Heart left ventricle (tissue), 16 donors: ENCODE measurements at regions of chr4 and their contacts with region 1.

Region 1: GRCh38 chr4:186587416-186588018 is 32.1 kb upstream of the MTNR1A start:
- DNase-seq: peak; percentile 41 to 75 (median 63)
- ATAC-seq: peak in 3 of 4 donors; percentile 59 to 71 (median 61)
- H3K4me3 ChIP-seq: no peak overlapping the region
- H3K27ac ChIP-seq: no peak overlapping the region
- H3K4me1 ChIP-seq: peaks cover 0 to 16% (median 0%) of the 10 kb centered on the region in 12 donors
- H3K27me3 ChIP-seq: no peaks in the 10 kb centered on the region
- CTCF ChIP-seq: peak; percentile 82 to 94 (median 91)
- POLR2A ChIP-seq: no peak

Region 2: GRCh38 chr4:186067757-186068385 is 519.6 kb before region 1 on chr4:
- intact Hi-C with region 1: loop called in 3 of 10 experiments (anchors 5 to 10 kb)
- DNase-seq: peak in 4 of 5 donors; percentile 50 to 62 (median 55)
- ATAC-seq: peak; percentile 71 to 92 (median 91)
- H3K4me3 ChIP-seq: peak overlapping the region; percentile 19 to 71 (median 60)
- H3K27ac ChIP-seq: peak overlapping the region in 6 of 12 donors; percentile 46 to 79 (median 72)
- H3K4me1 ChIP-seq: peaks cover 0 to 20% (median 4%) of the 10 kb centered on the region in 12 donors
- H3K27me3 ChIP-seq: no peaks in the 10 kb centered on the region
- CTCF ChIP-seq: peak; percentile 35 to 65 (median 53)
- POLR2A ChIP-seq: no peak

Region 3: DNA sequence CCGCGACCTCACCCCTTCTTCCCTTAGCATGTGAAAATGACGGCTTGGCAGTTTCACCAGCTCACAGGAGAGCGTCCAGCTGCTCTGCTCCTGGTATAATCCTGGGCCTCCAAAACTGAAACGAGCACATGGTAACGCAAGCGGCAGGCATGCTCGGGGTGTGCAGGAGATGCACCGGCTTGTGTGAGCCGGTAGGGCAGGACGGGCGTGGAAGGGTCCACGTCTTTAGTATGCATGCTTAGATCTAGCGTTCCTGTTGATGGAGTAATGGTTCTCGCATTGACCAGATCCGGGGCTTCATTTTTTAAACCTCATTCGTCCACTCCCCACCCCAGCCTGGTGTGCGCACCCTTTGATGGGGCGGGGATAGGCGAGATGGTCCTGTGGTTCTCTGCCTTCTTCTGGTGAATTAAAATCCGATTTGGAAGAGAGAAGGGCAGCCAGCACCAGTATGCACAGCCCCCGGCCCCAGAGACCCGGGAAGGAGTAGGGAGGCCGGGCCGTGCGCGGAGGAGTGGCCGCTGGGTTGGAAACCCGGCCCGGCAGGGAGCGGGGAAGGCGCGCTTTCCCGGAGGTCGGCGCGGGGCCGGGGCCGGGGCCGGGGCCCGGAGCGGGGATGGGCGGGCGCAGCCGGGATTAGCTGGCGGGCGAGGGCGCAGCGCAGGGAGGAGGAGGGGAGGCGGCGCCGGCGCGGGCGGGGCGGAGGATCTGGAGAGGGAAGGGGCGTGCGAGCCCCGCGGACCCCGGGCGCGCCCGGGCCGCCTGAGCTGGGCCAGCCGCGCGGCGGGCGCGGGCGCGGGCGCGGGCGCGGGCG is 443.2 kb before region 1 on chr4:
- intact Hi-C with region 1: loop called in 1 of 10 experiments (anchors 10 kb)
- DNase-seq: peak; percentile 65 to 78 (median 69)
- ATAC-seq: peak; percentile 40 to 86 (median 73)
- H3K4me3 ChIP-seq: peak overlapping the region; percentile 35 to 81 (median 62)
- H3K27ac ChIP-seq: peak overlapping the region in 11 of 12 donors; percentile 52 to 86 (median 74)
- H3K4me1 ChIP-seq: peaks cover 0 to 19% (median 8%) of the 10 kb centered on the region in 12 donors
- H3K27me3 ChIP-seq: peaks cover 0 to 24% (median 0%) of the 10 kb centered on the region in 9 donors
- CTCF ChIP-seq: peak in 3 of 12 donors; percentile 16 to 28 (median 17)
- POLR2A ChIP-seq: no peak

Region 4: GRCh38 chr4:186297013-186297645 is 290.4 kb before region 1 on chr4:
- intact Hi-C with region 1: loop called (anchors 1 to 2 kb)
- DNase-seq: no peak
- ATAC-seq: no peak
- H3K4me3 ChIP-seq: no peak overlapping the region
- H3K27ac ChIP-seq: no peak overlapping the region
- H3K4me1 ChIP-seq: peaks cover 0 to 4% (median 0%) of the 10 kb centered on the region in 12 donors
- H3K27me3 ChIP-seq: peaks cover 3 to 44% (median 20%) of the 10 kb centered on the region in 9 donors
- CTCF ChIP-seq: peak; percentile 47 to 72 (median 63)
- POLR2A ChIP-seq: no peak

Region 5: DNA sequence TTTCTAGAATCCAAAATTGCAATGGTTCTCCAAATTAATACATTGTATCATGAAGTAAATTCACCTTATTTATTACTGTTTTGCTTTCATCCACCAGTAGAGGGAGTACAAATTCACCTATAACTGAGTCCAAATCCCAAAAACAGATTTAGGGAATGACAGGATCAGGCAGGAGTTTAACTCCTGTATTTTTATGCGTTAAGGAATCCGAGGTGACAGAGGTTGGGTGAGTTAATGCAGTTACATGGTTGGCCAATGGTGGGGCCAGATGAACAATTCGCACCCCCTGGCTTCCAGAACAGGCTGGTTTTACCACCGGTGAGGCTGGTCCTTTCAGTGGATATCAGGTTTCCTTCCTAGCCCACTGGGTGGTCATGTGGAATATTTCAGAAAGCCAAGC is 114.6 kb before region 1 on chr4:
- intact Hi-C with region 1: loop called in 8 of 10 experiments (anchors 1 to 10 kb)
- DNase-seq: no peak
- ATAC-seq: no peak
- H3K4me3 ChIP-seq: no peak overlapping the region
- H3K27ac ChIP-seq: no peak overlapping the region
- H3K4me1 ChIP-seq: no peaks in the 10 kb centered on the region
- H3K27me3 ChIP-seq: no peaks in the 10 kb centered on the region
- CTCF ChIP-seq: peak; percentile 27 to 69 (median 49)
- POLR2A ChIP-seq: no peak

Region 6: GRCh38 chr4:186485561-186486062 is 101.9 kb before region 1 on chr4:
- intact Hi-C with region 1: loop called in 1 of 10 experiments (anchors 10 kb)
- DNase-seq: peak in 2 of 5 donors; percentile 19 to 32
- ATAC-seq: no peak
- H3K4me3 ChIP-seq: peak overlapping the region in 8 of 12 donors; percentile 14 to 46 (median 29)
- H3K27ac ChIP-seq: no peak overlapping the region
- H3K4me1 ChIP-seq: no peaks in the 10 kb centered on the region
- H3K27me3 ChIP-seq: peaks cover 0 to 27% (median 0%) of the 10 kb centered on the region in 9 donors
- CTCF ChIP-seq: no peak
- POLR2A ChIP-seq: no peak

Region 7: GRCh38 chr4:187006189-187006618 is 418.7 kb after region 1 on chr4:
- intact Hi-C with region 1: no loop called
- DNase-seq: no peak
- ATAC-seq: no peak
- H3K4me3 ChIP-seq: no peak overlapping the region
- H3K27ac ChIP-seq: no peak overlapping the region
- H3K4me1 ChIP-seq: no peaks in the 10 kb centered on the region
- H3K27me3 ChIP-seq: no peaks in the 10 kb centered on the region
- CTCF ChIP-seq: no peak
- POLR2A ChIP-seq: no peak